ENCODE measurements at regions of chr1 and their contacts with region 1.

Region 1: DNA sequence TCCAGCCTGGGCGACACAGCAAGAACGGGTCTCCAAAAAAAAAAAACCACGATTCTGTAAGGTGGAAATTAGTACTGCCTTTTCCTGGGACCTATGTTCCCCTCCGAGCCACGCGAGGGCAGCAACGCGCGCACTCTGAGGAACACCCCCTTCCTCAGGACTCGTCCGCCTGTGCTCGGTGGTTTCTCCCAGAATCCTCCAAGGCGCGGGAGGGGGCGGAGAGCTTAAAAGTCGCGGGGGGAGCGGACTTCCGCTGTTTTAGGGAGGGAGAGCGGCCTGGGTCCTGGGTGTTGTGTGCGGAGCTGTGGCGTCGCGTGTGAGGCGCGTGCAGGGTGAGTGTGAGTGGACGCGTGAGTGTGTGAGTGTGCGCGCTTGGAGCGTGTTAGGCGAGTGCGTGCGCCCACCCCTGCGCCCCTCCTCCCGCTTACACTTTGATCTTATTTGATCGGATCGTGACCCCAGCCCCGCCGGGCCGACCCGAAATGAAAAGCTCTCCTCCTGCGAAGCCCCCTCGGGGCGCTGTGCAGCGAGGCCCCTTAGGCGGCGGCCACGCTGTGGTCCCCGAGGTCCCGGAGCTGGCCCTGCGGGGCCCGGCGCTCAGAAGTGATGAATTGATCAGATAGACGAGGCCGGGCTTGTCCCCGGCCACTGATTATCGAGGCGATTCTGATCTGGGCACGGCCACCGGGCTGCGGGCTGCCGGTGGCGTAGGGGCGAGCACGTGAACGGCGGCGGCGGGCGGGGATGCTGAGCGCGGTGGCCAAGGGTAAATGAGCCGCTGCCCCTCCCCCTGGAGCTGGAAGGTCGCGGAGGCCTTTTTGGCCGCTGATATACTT is 9.6 kb downstream of the TMEM167B start:
- DNase-seq: peak; percentile 98
- ATAC-seq: peak; percentile 89
- H3K4me3 ChIP-seq: peak overlapping the region; percentile 45 to 90 (median 85)
- H3K4me3 Mint-ChIP-seq: peak overlapping the region; percentile 94
- H3K27ac ChIP-seq: peak overlapping the region; percentile 91 to 94
- H3K27ac Mint-ChIP-seq: peak overlapping the region; percentile 97
- H3K4me1 ChIP-seq: peaks cover 8 to 17% of the 10 kb centered on the region in 2 donors
- H3K4me1 Mint-ChIP-seq: peaks cover 8% of the 10 kb centered on the region
- H3K27me3 ChIP-seq: no peaks in the 10 kb centered on the region
- H3K27me3 Mint-ChIP-seq: no peaks in the 10 kb centered on the region
- CTCF ChIP-seq: peak; percentile 82

Region 2: GRCh38 chr1:107936498-107937481 is 1163.4 kb before region 1 on chr1:
- CTCF ChIA-PET with region 1: no interaction called
- POLR2A ChIA-PET with region 1: interaction called, 10 read pairs
- intact Hi-C with region 1: no loop called
- DNase-seq: peak; percentile 42
- ATAC-seq: peak; percentile 54
- H3K4me3 ChIP-seq: no peak overlapping the region
- H3K4me3 Mint-ChIP-seq: peak overlapping the region; percentile 69
- H3K27ac ChIP-seq: peak overlapping the region in 1 of 2 donors; percentile 3
- H3K27ac Mint-ChIP-seq: peak overlapping the region; percentile 78
- H3K4me1 ChIP-seq: peaks cover 50 to 56% of the 10 kb centered on the region in 2 donors
- H3K4me1 Mint-ChIP-seq: peaks cover 81% of the 10 kb centered on the region
- H3K27me3 ChIP-seq: no peaks in the 10 kb centered on the region
- H3K27me3 Mint-ChIP-seq: no peaks in the 10 kb centered on the region
- CTCF ChIP-seq: no peak

Region 3: GRCh38 chr1:109027841-109028240 is 72.3 kb before region 1 on chr1:
- CTCF ChIA-PET with region 1: interaction called, 11 read pairs
- POLR2A ChIA-PET with region 1: no interaction called
- intact Hi-C with region 1: no loop called
- DNase-seq: no peak
- ATAC-seq: no peak
- H3K4me3 ChIP-seq: no peak overlapping the region
- H3K4me3 Mint-ChIP-seq: no peak overlapping the region
- H3K27ac ChIP-seq: no peak overlapping the region
- H3K27ac Mint-ChIP-seq: no peak overlapping the region
- H3K4me1 ChIP-seq: no peaks in the 10 kb centered on the region
- H3K4me1 Mint-ChIP-seq: peaks cover 2% of the 10 kb centered on the region
- H3K27me3 ChIP-seq: no peaks in the 10 kb centered on the region
- H3K27me3 Mint-ChIP-seq: no peaks in the 10 kb centered on the region
- CTCF ChIP-seq: peak; percentile 50

Region 4: GRCh38 chr1:109075531-109076490 is 24.3 kb before region 1 on chr1 and contains the start of gene TAF13:
- CTCF ChIA-PET with region 1: interaction called, 44 read pairs
- POLR2A ChIA-PET with region 1: interaction called, 32 read pairs
- intact Hi-C with region 1: loop called (anchors 1 kb)
- DNase-seq: peak; percentile 95
- ATAC-seq: peak; percentile 99
- H3K4me3 ChIP-seq: peak within 1 kb of the TSS; percentile 63 to 98 (median 92)
- H3K4me3 Mint-ChIP-seq: peak within 1 kb of the TSS; percentile 99
- H3K27ac ChIP-seq: peak within 1 kb of the TSS; percentile 95 to 98
- H3K27ac Mint-ChIP-seq: peak within 1 kb of the TSS; percentile 97
- H3K4me1 ChIP-seq: peaks cover 12 to 13% of the 10 kb centered on the region in 2 donors
- H3K4me1 Mint-ChIP-seq: peaks cover 17% of the 10 kb centered on the region
- H3K27me3 ChIP-seq: no peaks in the 10 kb centered on the region
- H3K27me3 Mint-ChIP-seq: no peaks in the 10 kb centered on the region
- CTCF ChIP-seq: no peak
- total RNA-seq, gene TAF13: 12.9 and 14.3 TPM in 2 replicates

Region 5: GRCh38 chr1:109193653-109194590 is 93.8 kb after region 1 on chr1:
- CTCF ChIA-PET with region 1: interaction called, 10 read pairs
- POLR2A ChIA-PET with region 1: no interaction called
- intact Hi-C with region 1: no loop called
- DNase-seq: peak; percentile 75
- ATAC-seq: peak; percentile 94
- H3K4me3 ChIP-seq: no peak overlapping the region
- H3K4me3 Mint-ChIP-seq: no peak overlapping the region
- H3K27ac ChIP-seq: no peak overlapping the region
- H3K27ac Mint-ChIP-seq: peak overlapping the region; percentile 10
- H3K4me1 ChIP-seq: peaks cover 9 to 10% of the 10 kb centered on the region in 2 donors
- H3K4me1 Mint-ChIP-seq: peaks cover 10% of the 10 kb centered on the region
- H3K27me3 ChIP-seq: no peaks in the 10 kb centered on the region
- H3K27me3 Mint-ChIP-seq: peaks cover 6% of the 10 kb centered on the region
- CTCF ChIP-seq: peak; percentile 80

Region 6: GRCh38 chr1:109426278-109427170 is 326.4 kb after region 1 on chr1 and contains the start of gene PSMA5:
- CTCF ChIA-PET with region 1: no interaction called
- POLR2A ChIA-PET with region 1: no interaction called
- intact Hi-C with region 1: loop called (anchors 2 kb)
- DNase-seq: peak; percentile 97
- ATAC-seq: peak; percentile 95
- H3K4me3 ChIP-seq: peak within 1 kb of the TSS; percentile 72 to 98 (median 79)
- H3K4me3 Mint-ChIP-seq: peak within 1 kb of the TSS; percentile 98
- H3K27ac ChIP-seq: peak within 1 kb of the TSS; percentile 71 to 82
- H3K27ac Mint-ChIP-seq: peak within 1 kb of the TSS; percentile 98
- H3K4me1 ChIP-seq: peaks cover 13 to 19% of the 10 kb centered on the region in 2 donors
- H3K4me1 Mint-ChIP-seq: peaks cover 33% of the 10 kb centered on the region
- H3K27me3 ChIP-seq: no peaks in the 10 kb centered on the region
- H3K27me3 Mint-ChIP-seq: no peaks in the 10 kb centered on the region
- CTCF ChIP-seq: no peak
- total RNA-seq, gene PSMA5: 58.3 and 62.9 TPM in 2 replicates